ENCODE measurements at regions of chr4 and their contacts with region 1.

Region 1: DNA sequence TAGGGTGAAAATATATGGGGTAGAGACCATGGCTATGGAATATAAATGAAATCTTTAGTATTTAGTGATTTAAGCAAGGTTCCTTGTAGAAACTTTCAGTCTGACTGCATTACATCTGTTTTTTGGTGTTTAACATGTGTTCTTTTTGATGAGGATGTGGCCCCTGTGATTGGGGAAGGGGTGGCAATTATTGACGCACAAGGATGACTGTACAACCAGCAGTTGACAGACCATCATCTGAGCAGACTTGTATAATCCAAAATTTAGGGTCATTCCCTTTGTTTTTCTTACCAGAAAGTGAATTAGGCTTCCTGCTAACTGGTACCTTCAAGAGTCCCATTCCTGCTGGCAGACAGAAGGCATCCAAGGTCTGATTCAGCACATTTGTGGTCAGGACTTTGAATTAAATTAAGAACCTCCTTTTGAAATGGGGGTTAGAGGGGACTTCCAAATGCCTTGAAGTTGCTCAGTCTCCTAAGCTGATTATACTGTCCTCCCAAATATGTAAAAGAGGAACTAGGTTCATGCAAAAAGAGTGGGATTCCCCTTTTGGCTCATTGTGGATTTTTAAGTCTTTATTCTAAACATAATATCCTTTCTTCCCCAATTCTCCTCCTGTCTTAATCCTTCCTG is 112.4 kb upstream of the CXCL13 start:
- DNase-seq: no peak
- ATAC-seq: peak; percentile 89
- H3K4me3 Mint-ChIP-seq: peak overlapping the region; percentile 48
- H3K27ac Mint-ChIP-seq: peak overlapping the region; percentile 87
- H3K4me1 Mint-ChIP-seq: peaks cover 23% of the 10 kb centered on the region
- H3K27me3 Mint-ChIP-seq: no peaks in the 10 kb centered on the region
- CTCF ChIP-seq: no peak

Region 2: DNA sequence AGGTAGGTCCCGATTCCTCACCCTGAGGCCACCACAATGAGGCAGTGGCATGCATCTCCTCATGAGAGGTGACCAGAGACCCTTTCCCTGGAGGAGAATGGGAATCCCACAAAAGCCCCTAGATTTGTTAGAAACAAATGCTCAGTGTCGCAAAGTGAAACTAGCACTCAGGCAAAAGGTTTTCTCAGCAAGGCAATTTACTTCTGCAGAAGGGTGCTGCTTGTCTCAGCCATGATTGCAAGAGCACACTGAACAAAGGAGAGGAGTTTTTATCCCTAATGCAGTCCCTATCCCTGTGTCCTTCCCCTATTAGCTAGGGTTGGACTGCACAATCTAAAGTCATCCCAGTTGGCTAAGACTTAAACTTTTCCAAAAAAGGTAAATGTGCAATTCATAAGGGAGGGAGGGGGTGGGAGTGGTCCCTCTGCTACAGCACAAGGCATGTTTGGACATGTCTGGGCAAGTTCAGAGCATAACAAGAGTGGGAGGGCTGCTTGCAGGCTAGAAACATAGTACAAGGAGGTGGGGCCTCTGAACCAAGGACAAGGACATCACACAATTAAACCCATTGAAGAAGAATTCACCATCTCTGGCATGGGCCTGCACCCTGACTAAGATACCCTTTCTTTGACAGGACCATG is 150.9 kb before region 1 on chr4:
- CTCF ChIA-PET with region 1: no interaction called
- POLR2A ChIA-PET with region 1: no interaction called
- intact Hi-C with region 1: no loop called
- DNase-seq: no peak
- ATAC-seq: no peak
- H3K4me3 Mint-ChIP-seq: no peak overlapping the region
- H3K27ac Mint-ChIP-seq: no peak overlapping the region
- H3K4me1 Mint-ChIP-seq: no peaks in the 10 kb centered on the region
- H3K27me3 Mint-ChIP-seq: peaks cover 9% of the 10 kb centered on the region
- CTCF ChIP-seq: no peak

Region 3: GRCh38 chr4:77360451-77360850 is 132.8 kb before region 1 on chr4:
- CTCF ChIA-PET with region 1: no interaction called
- POLR2A ChIA-PET with region 1: no interaction called
- intact Hi-C with region 1: no loop called
- DNase-seq: no peak
- ATAC-seq: no peak
- H3K4me3 Mint-ChIP-seq: no peak overlapping the region
- H3K27ac Mint-ChIP-seq: no peak overlapping the region
- H3K4me1 Mint-ChIP-seq: peaks cover 7% of the 10 kb centered on the region
- H3K27me3 Mint-ChIP-seq: peaks cover 3% of the 10 kb centered on the region
- CTCF ChIP-seq: no peak

Region 4: GRCh38 chr4:77586951-77587383 is 93.7 kb after region 1 on chr4:
- CTCF ChIA-PET with region 1: interaction called, 3 read pairs
- POLR2A ChIA-PET with region 1: interaction called, 9 read pairs
- intact Hi-C with region 1: loop called (anchors 1 kb)
- DNase-seq: peak; percentile 35
- ATAC-seq: peak; percentile 93
- H3K4me3 Mint-ChIP-seq: peak overlapping the region; percentile 13
- H3K27ac Mint-ChIP-seq: peak overlapping the region; percentile 76
- H3K4me1 Mint-ChIP-seq: peaks cover 28% of the 10 kb centered on the region
- H3K27me3 Mint-ChIP-seq: no peaks in the 10 kb centered on the region
- CTCF ChIP-seq: no peak

Region 5: GRCh38 chr4:77650787-77651186 is 157.6 kb after region 1 on chr4:
- CTCF ChIA-PET with region 1: no interaction called
- POLR2A ChIA-PET with region 1: no interaction called
- intact Hi-C with region 1: no loop called
- DNase-seq: no peak
- ATAC-seq: no peak
- H3K4me3 Mint-ChIP-seq: no peak overlapping the region
- H3K27ac Mint-ChIP-seq: no peak overlapping the region
- H3K4me1 Mint-ChIP-seq: peaks cover 13% of the 10 kb centered on the region
- H3K27me3 Mint-ChIP-seq: no peaks in the 10 kb centered on the region
- CTCF ChIP-seq: no peak

Region 6: GRCh38 chr4:78638337-78639172 is 1145.3 kb after region 1 on chr4:
- CTCF ChIA-PET with region 1: no interaction called
- POLR2A ChIA-PET with region 1: no interaction called
- intact Hi-C with region 1: no loop called
- DNase-seq: no peak
- ATAC-seq: peak; percentile 78
- H3K4me3 Mint-ChIP-seq: peak overlapping the region; percentile 62
- H3K27ac Mint-ChIP-seq: peak overlapping the region; percentile 93
- H3K4me1 Mint-ChIP-seq: peaks cover 71% of the 10 kb centered on the region
- H3K27me3 Mint-ChIP-seq: no peaks in the 10 kb centered on the region
- CTCF ChIP-seq: no peak